Activated CD8-positive, alpha-beta T cell treated with anti-CD3 and anti-CD28 coated beads, Interleukin-2, amount 10 ng/mL, durations not matched to agents 7 days and 5 days (primary cell): ENCODE measurements at regions of chr1 and their contacts with region 1.

Region 1: GRCh38 chr1:160006312-160006940 is 25.4 kb downstream of the PIGM start:
- DNase-seq: peak; percentile 84
- ATAC-seq: peak; percentile 92
- H3K4me3 Mint-ChIP-seq: no peak overlapping the region
- H3K27ac Mint-ChIP-seq: no peak overlapping the region
- H3K4me1 Mint-ChIP-seq: no peaks in the 10 kb centered on the region
- H3K27me3 Mint-ChIP-seq: peaks cover 21% of the 10 kb centered on the region

Region 2: DNA sequence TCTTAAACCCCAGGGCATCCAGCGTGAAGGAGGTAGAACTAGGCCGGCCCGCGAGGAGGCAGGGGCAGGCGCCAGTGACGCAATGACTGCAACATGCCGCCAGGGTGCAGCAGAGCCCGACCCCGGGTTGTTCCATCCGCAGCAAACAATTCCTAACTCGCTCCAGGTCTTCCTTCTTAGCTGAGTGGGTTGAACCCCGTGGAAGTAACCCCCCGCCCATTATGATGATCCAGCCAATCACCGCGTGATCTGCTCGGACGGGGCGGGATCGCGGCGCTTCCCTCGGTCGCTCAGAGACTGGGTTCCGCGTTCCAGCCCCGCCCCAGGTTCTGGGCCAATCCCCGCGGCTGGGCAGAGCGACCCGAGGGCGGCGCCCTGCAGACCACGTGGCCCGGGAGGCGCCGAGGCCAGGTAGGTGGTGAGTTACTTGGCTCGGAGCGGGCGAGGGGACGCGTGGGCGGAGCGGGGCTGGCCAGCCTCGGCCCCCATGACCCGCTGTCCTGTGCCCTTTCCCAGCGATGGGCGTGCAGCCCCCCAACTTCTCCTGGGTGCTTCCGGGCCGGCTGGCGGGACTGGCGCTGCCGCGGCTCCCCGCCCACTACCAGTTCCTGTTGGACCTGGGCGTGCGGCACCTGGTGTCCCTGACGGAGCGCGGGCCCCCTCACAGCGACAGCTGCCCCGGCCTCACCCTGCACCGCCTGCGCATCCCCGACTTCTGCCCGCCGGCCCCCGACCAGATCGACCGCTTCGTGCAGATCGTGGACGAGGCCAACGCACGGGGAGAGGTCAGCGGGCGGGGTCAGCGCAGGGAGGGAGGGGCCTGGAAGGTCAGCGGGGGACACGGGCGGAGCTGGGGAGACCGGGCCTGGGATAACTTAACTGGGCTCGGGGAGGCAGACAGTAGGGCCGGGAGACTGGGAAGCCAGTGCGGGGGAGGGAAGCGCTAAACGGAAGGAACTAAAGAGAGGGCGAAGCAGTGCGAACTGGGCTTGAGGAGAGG is 225.5 kb before region 1 on chr1 and contains the start of gene DUSP23:
- CTCF ChIA-PET with region 1: interaction called, 11 read pairs
- POLR2A ChIA-PET with region 1: no interaction called
- DNase-seq: peak; percentile 97
- ATAC-seq: peak; percentile 99
- H3K4me3 Mint-ChIP-seq: peak within 1 kb of the TSS; percentile 75
- H3K27ac Mint-ChIP-seq: peak within 1 kb of the TSS; percentile 56
- H3K4me1 Mint-ChIP-seq: peaks cover 35% of the 10 kb centered on the region
- H3K27me3 Mint-ChIP-seq: peaks cover 17% of the 10 kb centered on the region
- total RNA-seq, gene DUSP23: 21.9 to 26.5 TPM

Region 3: DNA sequence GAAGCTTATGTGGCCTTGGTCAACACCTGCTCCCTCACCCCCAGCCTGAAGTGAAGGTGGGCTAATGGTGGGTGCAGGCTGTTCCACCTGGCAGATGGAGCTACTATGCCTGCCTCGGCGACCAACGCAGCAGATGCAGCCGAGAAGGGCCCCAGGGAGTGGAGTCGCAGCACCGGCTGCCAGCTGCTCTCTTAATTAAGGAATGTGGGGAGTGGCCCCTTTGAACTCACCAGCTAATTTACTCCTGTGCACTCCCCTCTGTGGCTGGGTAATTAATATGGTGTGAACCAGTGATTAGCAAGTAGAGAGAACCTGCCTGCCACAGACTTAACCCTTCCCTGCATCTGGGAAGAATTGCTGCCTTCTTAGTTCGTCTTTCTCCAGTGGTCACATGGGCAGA is 183.0 kb before region 1 on chr1:
- CTCF ChIA-PET with region 1: no interaction called
- POLR2A ChIA-PET with region 1: no interaction called
- DNase-seq: no peak
- ATAC-seq: no peak
- H3K4me3 Mint-ChIP-seq: no peak overlapping the region
- H3K27ac Mint-ChIP-seq: no peak overlapping the region
- H3K4me1 Mint-ChIP-seq: peaks cover 44% of the 10 kb centered on the region
- H3K27me3 Mint-ChIP-seq: peaks cover 52% of the 10 kb centered on the region

Region 4: GRCh38 chr1:159924981-159925712 is 81.3 kb before region 1 on chr1 and contains the start of gene TAGLN2:
- CTCF ChIA-PET with region 1: interaction called, 47 read pairs
- POLR2A ChIA-PET with region 1: interaction called, 6 read pairs
- DNase-seq: peak; percentile 90
- ATAC-seq: peak; percentile 66
- H3K4me3 Mint-ChIP-seq: peak within 1 kb of the TSS; percentile 90
- H3K27ac Mint-ChIP-seq: peak within 1 kb of the TSS; percentile 96
- H3K4me1 Mint-ChIP-seq: peaks cover 43% of the 10 kb centered on the region
- H3K27me3 Mint-ChIP-seq: no peaks in the 10 kb centered on the region
- total RNA-seq, gene TAGLN2: 476 to 510 TPM

Region 5: GRCh38 chr1:159953536-159954515 is 52.6 kb before region 1 on chr1 and contains the start of gene SLAMF9:
- CTCF ChIA-PET with region 1: interaction called, 22 read pairs
- POLR2A ChIA-PET with region 1: no interaction called
- DNase-seq: no peak
- ATAC-seq: no peak
- H3K4me3 Mint-ChIP-seq: no peak within 1 kb of the TSS
- H3K27ac Mint-ChIP-seq: no peak within 1 kb of the TSS
- H3K4me1 Mint-ChIP-seq: peaks cover 5% of the 10 kb centered on the region
- H3K27me3 Mint-ChIP-seq: peaks cover 48% of the 10 kb centered on the region
- total RNA-seq, gene SLAMF9: not detected

Region 6: GRCh38 chr1:159979257-159979656 is 27.2 kb before region 1 on chr1:
- CTCF ChIA-PET with region 1: interaction called, 17 read pairs
- POLR2A ChIA-PET with region 1: no interaction called
- DNase-seq: no peak
- ATAC-seq: no peak
- H3K4me3 Mint-ChIP-seq: no peak overlapping the region
- H3K27ac Mint-ChIP-seq: no peak overlapping the region
- H3K4me1 Mint-ChIP-seq: no peaks in the 10 kb centered on the region
- H3K27me3 Mint-ChIP-seq: peaks cover 45% of the 10 kb centered on the region

Region 7: GRCh38 chr1:160031365-160032164 is 25.1 kb after region 1 on chr1 and contains the start of gene PIGM:
- CTCF ChIA-PET with region 1: interaction called, 54 read pairs
- POLR2A ChIA-PET with region 1: no interaction called
- DNase-seq: peak; percentile 97
- ATAC-seq: peak; percentile 99
- H3K4me3 Mint-ChIP-seq: peak within 1 kb of the TSS; percentile 95
- H3K27ac Mint-ChIP-seq: peak within 1 kb of the TSS; percentile 90
- H3K4me1 Mint-ChIP-seq: peaks cover 29% of the 10 kb centered on the region
- H3K27me3 Mint-ChIP-seq: peaks cover 12% of the 10 kb centered on the region
- total RNA-seq, gene PIGM: 4.2 to 4.5 TPM

Region 8: DNA sequence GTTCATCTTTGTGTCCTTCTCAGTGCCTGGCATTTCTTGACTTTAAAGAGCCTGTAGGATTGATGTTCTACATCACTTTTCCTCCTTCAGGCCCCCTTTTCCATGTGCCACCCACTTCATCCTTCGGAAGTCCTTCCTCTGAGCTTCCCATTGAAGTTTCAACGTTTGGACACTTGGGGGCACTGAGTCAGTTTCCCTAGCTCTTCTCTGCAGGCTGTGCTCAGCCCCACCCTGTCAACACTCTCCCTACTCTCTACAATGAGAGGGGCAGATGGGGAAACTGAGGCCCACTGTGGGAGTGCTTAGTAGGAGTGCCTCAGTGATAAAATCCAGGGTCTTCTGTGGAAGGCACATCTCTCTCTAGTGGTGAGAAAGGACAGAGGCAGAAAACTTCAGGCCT is 51.7 kb after region 1 on chr1:
- CTCF ChIA-PET with region 1: interaction called, 14 read pairs
- POLR2A ChIA-PET with region 1: no interaction called
- DNase-seq: no peak
- ATAC-seq: no peak
- H3K4me3 Mint-ChIP-seq: no peak overlapping the region
- H3K27ac Mint-ChIP-seq: no peak overlapping the region
- H3K4me1 Mint-ChIP-seq: no peaks in the 10 kb centered on the region
- H3K27me3 Mint-ChIP-seq: peaks cover 37% of the 10 kb centered on the region

Region 9: DNA sequence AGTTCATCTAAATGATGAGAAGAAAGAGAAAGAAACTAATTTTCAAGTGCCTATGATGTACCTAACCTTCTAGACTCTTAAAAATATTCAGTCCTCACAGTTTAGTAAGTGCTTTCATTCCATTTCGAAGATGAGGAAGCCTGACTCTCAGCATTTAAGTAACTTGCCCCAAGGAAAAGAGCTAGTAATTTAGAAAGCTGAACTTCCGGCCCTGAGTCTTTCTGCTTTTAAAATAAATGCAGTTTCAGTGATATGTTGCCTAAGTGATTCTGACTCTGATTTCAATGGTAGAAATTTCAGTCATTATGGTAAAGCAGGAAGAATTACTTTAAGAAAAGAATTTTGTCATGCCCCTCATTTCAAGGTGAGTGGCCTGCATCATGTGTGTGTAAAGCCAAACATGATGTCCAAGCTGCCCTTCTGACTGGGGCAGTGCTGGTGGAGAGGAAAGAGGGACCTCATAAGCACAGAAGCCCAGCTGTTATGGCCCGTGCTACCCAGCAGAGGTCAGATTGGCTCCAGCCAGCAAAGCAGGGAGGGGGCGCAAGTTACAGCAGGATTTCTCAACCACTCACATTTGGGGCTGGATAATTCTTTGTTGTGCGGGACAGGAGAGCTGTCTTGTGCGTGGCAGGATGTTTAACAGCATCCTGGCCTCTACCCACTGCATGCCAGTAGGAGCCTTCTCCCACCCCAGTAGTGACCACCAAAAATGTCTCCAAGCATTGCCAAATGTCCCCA is 155.7 kb after region 1 on chr1:
- CTCF ChIA-PET with region 1: no interaction called
- POLR2A ChIA-PET with region 1: no interaction called
- DNase-seq: no peak
- ATAC-seq: no peak
- H3K4me3 Mint-ChIP-seq: no peak overlapping the region
- H3K27ac Mint-ChIP-seq: no peak overlapping the region
- H3K4me1 Mint-ChIP-seq: peaks cover 10% of the 10 kb centered on the region
- H3K27me3 Mint-ChIP-seq: peaks cover 37% of the 10 kb centered on the region

Region 10: GRCh38 chr1:160346958-160347357 is 340.5 kb after region 1 on chr1:
- CTCF ChIA-PET with region 1: no interaction called
- POLR2A ChIA-PET with region 1: no interaction called
- DNase-seq: no peak
- ATAC-seq: no peak
- H3K4me3 Mint-ChIP-seq: no peak overlapping the region
- H3K27ac Mint-ChIP-seq: no peak overlapping the region
- H3K4me1 Mint-ChIP-seq: peaks cover 30% of the 10 kb centered on the region
- H3K27me3 Mint-ChIP-seq: no peaks in the 10 kb centered on the region